CD8-positive, alpha-beta memory T cell (primary cell): ENCODE measurements at regions of chr7 and their contacts with region 1.

Region 1: DNA sequence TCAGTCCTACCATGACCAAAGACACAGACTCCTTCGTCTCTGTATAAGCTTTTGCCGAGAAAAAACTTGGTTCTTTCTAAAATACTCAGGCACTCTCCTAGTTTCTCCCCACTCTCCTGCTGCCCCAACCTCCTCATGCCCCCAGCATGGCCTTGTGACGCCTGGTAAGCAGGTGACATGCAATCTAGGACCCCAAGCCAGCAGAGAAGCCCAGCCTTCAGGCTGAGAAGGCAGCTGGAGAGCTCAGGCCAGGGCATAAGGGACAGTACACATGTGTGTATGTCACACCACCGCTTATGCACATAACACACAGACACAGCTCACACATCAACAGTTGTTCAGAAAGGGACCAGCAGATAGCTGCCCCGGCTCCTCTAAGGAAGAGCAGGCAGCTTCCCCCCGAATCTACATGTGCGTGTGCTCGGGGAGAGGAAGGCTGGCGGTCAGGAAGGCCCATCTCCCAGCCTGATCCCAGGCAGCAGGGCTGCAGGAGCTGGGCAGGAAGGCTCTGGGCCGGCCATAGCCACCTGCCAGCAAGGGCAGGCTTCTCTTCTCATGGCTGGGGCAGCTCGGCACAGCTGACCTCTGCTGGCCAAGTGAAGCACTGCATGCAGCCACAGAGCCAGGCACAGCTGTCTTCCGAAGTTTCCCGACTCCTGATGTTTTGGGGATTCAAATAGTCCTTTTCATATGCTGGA is 8.5 kb downstream of the DDX56 start:
- DNase-seq: peak; percentile 43 to 73 (median 47)
- H3K4me3 ChIP-seq: no peak overlapping the region
- H3K4me3 Mint-ChIP-seq: peak overlapping the region in 1 of 7 donors; percentile 35
- H3K27ac ChIP-seq: peak overlapping the region; percentile 64
- H3K27ac Mint-ChIP-seq: peak overlapping the region in 7 of 8 donors; percentile 20 to 87 (median 60)
- H3K4me1 ChIP-seq: no peaks in the 10 kb centered on the region
- H3K4me1 Mint-ChIP-seq: peaks cover 7 to 13% (median 11%) of the 10 kb centered on the region in 3 donors
- H3K27me3 ChIP-seq: no peaks in the 10 kb centered on the region
- H3K27me3 Mint-ChIP-seq: peaks cover 0 to 2% of the 10 kb centered on the region in 2 donors

Region 2: GRCh38 chr7:44240983-44241510 is 324.2 kb before region 1 on chr7:
- CTCF ChIA-PET with region 1: interaction called, 20 read pairs
- POLR2A ChIA-PET with region 1: no interaction called
- DNase-seq: peak; percentile 21 to 66 (median 38)
- H3K4me3 ChIP-seq: no peak overlapping the region
- H3K4me3 Mint-ChIP-seq: peak overlapping the region in 4 of 7 donors; percentile 15 to 61 (median 38)
- H3K27ac ChIP-seq: no peak overlapping the region
- H3K27ac Mint-ChIP-seq: peak overlapping the region in 2 of 8 donors; percentile 51 to 57
- H3K4me1 ChIP-seq: peaks cover 5% of the 10 kb centered on the region
- H3K4me1 Mint-ChIP-seq: no peaks in the 10 kb centered on the region
- H3K27me3 ChIP-seq: no peaks in the 10 kb centered on the region
- H3K27me3 Mint-ChIP-seq: no peaks in the 10 kb centered on the region

Region 3: DNA sequence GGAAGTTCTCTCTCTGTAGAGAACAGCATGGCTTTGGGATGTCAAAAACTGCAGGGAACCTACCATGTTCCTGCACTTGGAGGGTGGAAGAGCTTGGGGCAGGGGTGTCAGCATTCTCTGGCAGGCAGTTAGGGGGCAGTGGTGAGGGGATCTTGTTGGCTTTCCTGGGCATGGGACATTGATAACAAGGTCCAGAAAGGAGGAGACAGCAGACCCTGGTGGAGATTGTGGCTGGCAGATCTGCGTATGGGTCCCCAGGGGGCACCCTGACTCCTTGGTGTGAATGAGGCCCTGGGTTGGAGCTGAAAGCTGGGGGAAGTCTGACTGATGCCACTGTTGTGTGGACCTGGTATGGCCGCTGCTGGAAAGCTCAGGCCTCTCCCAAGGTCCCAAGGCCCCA is 216.9 kb before region 1 on chr7:
- CTCF ChIA-PET with region 1: interaction called, 10 read pairs
- POLR2A ChIA-PET with region 1: no interaction called
- DNase-seq: no peak
- H3K4me3 ChIP-seq: no peak overlapping the region
- H3K4me3 Mint-ChIP-seq: no peak overlapping the region
- H3K27ac ChIP-seq: no peak overlapping the region
- H3K27ac Mint-ChIP-seq: peak overlapping the region in 1 of 8 donors; percentile 28
- H3K4me1 ChIP-seq: no peaks in the 10 kb centered on the region
- H3K4me1 Mint-ChIP-seq: no peaks in the 10 kb centered on the region
- H3K27me3 ChIP-seq: no peaks in the 10 kb centered on the region
- H3K27me3 Mint-ChIP-seq: peaks cover 22 to 52% of the 10 kb centered on the region in 2 donors

Region 4: DNA sequence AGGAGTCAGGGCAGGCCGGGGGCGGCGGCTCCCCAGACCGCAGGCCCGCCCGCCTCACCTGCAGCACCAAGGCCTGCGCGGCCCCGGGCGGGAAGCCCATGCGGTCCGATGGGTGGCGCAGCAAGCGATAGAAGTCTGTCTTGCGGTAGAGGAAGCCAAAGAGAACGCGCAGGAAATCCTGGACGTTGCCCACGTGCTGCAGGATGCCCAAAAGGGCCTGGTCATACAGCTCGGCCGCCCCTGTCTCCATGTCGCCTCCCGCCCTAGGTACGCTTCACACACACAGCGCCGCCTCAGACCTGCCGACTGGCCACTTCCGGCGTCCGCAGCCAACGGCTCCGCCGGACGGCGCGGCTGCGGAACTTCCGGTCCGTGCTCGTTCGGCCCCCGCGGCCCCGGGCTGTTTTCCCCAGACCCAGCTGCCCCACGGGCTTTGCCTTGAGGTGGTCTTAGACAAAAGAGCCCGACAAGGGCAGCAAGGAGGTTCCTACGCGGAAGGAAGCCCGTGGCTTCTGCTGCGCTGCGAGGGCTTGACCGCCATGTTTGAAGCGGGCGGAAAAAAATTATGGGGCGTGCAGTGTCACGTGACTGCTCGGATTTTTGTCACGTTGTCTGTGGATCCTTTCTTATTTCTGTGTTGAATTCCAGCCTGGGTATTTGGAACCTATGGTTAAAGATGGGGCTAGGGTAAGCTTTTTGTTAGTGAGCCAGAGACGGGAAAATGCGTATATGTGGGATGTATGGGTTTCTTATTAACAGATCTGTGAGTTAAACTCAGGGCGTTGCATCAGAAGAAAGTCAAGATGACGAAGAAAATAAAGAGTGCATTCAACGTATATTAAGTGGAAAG is 74.7 kb before region 1 on chr7 and contains the start of gene NUDCD3:
- CTCF ChIA-PET with region 1: interaction called, 13 read pairs
- POLR2A ChIA-PET with region 1: interaction called, 6 read pairs
- DNase-seq: peak; percentile 63 to 87 (median 78)
- H3K4me3 ChIP-seq: peak within 1 kb of the TSS; percentile 65
- H3K4me3 Mint-ChIP-seq: peak within 1 kb of the TSS; percentile 82 to 95 (median 88)
- H3K27ac ChIP-seq: peak within 1 kb of the TSS; percentile 99
- H3K27ac Mint-ChIP-seq: peak within 1 kb of the TSS; percentile 90 to 99 (median 93)
- H3K4me1 ChIP-seq: peaks cover 43% of the 10 kb centered on the region
- H3K4me1 Mint-ChIP-seq: peaks cover 43 to 49% (median 49%) of the 10 kb centered on the region in 3 donors
- H3K27me3 ChIP-seq: no peaks in the 10 kb centered on the region
- H3K27me3 Mint-ChIP-seq: peaks cover 3 to 9% of the 10 kb centered on the region in 2 donors
- total RNA-seq, gene NUDCD3: 98.8 to 99.5 TPM

Region 5: GRCh38 chr7:44581879-44582603 is 16.8 kb after region 1 on chr7 and contains the start of gene TMED4:
- CTCF ChIA-PET with region 1: interaction called, 34 read pairs
- POLR2A ChIA-PET with region 1: interaction called, 4 read pairs
- DNase-seq: peak; percentile 100
- H3K4me3 ChIP-seq: peak within 1 kb of the TSS; percentile 96
- H3K4me3 Mint-ChIP-seq: peak within 1 kb of the TSS; percentile 86 to 96 (median 90)
- H3K27ac ChIP-seq: peak within 1 kb of the TSS; percentile 99
- H3K27ac Mint-ChIP-seq: peak within 1 kb of the TSS; percentile 96 to 98 (median 97)
- H3K4me1 ChIP-seq: peaks cover 21% of the 10 kb centered on the region
- H3K4me1 Mint-ChIP-seq: peaks cover 19 to 49% (median 35%) of the 10 kb centered on the region in 3 donors
- H3K27me3 ChIP-seq: no peaks in the 10 kb centered on the region
- H3K27me3 Mint-ChIP-seq: peaks cover 0 to 3% of the 10 kb centered on the region in 2 donors
- total RNA-seq, gene TMED4: 78.8 to 80.5 TPM

Region 6: DNA sequence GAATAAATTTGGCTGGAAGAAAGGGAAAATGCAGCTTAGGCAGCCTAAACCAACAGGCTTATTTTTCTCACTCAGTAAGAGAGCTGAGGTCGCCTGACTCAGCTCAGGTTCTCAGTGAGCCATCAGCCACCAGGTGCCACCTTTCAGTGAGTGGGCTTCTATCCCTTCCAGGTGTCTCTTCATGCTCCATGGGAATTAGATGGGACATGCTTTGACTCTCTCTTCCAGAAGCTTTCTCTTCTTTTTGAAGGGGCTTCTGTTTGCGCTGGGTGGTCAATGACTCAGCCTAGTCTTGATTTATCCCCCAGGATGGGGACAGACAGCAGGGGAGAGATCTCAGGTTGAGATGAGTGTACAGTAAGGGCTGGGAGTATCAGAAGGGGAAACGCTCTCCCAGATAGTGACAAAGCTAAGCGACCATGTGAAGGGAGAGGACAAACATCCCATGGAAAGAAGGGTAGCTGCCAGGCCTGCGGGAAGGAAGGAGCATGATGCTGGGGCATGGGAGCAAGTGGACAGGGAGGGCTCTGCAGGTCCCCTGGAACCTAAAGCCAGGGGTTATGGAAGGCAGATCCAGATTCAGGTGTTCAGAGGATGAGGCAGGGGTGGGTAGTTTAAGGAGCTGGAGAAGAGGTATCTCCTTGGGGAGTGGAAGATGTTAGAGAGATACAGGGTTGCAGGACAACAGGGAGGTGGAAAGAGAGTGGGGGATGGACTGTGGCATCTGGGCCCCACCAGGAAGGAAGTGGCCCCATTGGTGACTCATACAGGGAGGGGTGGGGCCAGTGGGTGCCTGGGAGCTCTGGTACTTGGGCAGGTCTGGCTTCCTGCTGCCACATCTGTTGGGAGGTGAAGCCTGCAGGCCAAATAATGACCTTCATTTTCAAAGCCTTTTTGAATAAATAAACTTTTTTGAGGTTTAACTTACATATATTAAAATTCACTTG is 73.6 kb after region 1 on chr7:
- CTCF ChIA-PET with region 1: no interaction called
- POLR2A ChIA-PET with region 1: no interaction called
- DNase-seq: peak; percentile 46 to 91 (median 76)
- H3K4me3 ChIP-seq: peak overlapping the region; percentile 24
- H3K4me3 Mint-ChIP-seq: peak overlapping the region; percentile 51 to 94 (median 87)
- H3K27ac ChIP-seq: peak overlapping the region; percentile 90
- H3K27ac Mint-ChIP-seq: peak overlapping the region; percentile 94 to 100 (median 100)
- H3K4me1 ChIP-seq: peaks cover 80% of the 10 kb centered on the region
- H3K4me1 Mint-ChIP-seq: peaks cover 80 to 90% (median 87%) of the 10 kb centered on the region in 3 donors
- H3K27me3 ChIP-seq: no peaks in the 10 kb centered on the region
- H3K27me3 Mint-ChIP-seq: peaks cover 0 to 2% of the 10 kb centered on the region in 2 donors

Region 7: GRCh38 chr7:44811086-44811485 is 245.8 kb after region 1 on chr7:
- CTCF ChIA-PET with region 1: no interaction called
- POLR2A ChIA-PET with region 1: no interaction called
- DNase-seq: no peak
- H3K4me3 ChIP-seq: no peak overlapping the region
- H3K4me3 Mint-ChIP-seq: no peak overlapping the region
- H3K27ac ChIP-seq: no peak overlapping the region
- H3K27ac Mint-ChIP-seq: no peak overlapping the region
- H3K4me1 ChIP-seq: no peaks in the 10 kb centered on the region
- H3K4me1 Mint-ChIP-seq: no peaks in the 10 kb centered on the region
- H3K27me3 ChIP-seq: no peaks in the 10 kb centered on the region
- H3K27me3 Mint-ChIP-seq: no peaks in the 10 kb centered on the region